Caco-2 (cell line): ENCODE measurements at regions of chr17 and their contacts with region 1.

Region 1: DNA sequence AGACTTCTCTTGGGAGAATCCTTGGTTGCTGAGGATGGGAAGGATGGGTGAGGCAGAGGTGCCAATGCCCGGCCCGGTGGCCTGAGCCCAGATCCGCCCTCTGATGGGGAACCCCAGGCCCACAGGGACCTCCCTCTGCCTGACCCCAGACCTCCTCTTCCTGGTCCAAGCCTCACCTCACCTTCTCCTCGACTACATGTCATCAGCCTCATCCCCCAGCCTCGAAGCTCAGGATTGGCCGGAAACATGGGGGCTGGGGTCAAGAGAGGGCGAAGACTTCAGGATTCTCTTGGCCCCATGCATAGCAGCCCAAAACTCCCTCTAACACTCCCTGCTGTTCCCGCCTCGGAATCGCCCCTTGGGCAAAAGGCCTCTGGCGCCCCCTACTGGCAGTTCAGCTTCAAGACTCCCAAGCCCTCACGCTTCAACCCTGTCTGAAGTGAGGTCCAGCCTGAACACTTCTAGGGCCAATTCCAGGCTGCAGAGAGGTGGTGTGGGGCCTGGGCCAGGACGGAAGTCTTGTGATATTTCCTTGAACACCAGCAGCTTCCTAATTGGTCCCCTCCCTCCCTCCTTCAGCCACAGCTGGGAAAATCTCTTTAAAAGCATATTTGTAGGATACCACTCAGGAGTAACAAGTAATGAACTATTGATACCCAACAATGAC is 47.2 kb downstream of the ARHGAP27 start:
- DNase-seq: peak; percentile 87 to 94
- H3K4me3 ChIP-seq: no peak overlapping the region
- H3K4me3 Mint-ChIP-seq: no peak overlapping the region
- H3K27ac Mint-ChIP-seq: peak overlapping the region; percentile 6
- H3K4me1 ChIP-seq: peaks cover 8% of the 10 kb centered on the region; the same call in 1 of the 2 replicates
- H3K4me1 Mint-ChIP-seq: peaks cover 28% of the 10 kb centered on the region
- H3K27me3 ChIP-seq: no peaks in the 10 kb centered on the region
- H3K27me3 Mint-ChIP-seq: peaks cover 3% of the 10 kb centered on the region
- CTCF ChIP-seq: peak; percentile 97 to 98

Region 2: GRCh38 chr17:45235416-45236281 is 149.8 kb before region 1 on chr17:
- CTCF ChIA-PET with region 1: no interaction called
- POLR2A ChIA-PET with region 1: no interaction called
- intact Hi-C with region 1: loop called (anchors 2 kb)
- DNase-seq: peak; percentile 72 to 77
- H3K4me3 ChIP-seq: no peak overlapping the region
- H3K4me3 Mint-ChIP-seq: no peak overlapping the region
- H3K27ac Mint-ChIP-seq: no peak overlapping the region
- H3K4me1 ChIP-seq: peaks cover 6% of the 10 kb centered on the region; the same call in 1 of the 2 replicates
- H3K4me1 Mint-ChIP-seq: no peaks in the 10 kb centered on the region
- H3K27me3 ChIP-seq: no peaks in the 10 kb centered on the region
- H3K27me3 Mint-ChIP-seq: peaks cover 4% of the 10 kb centered on the region
- CTCF ChIP-seq: peak; percentile 82 to 86

Region 3: DNA sequence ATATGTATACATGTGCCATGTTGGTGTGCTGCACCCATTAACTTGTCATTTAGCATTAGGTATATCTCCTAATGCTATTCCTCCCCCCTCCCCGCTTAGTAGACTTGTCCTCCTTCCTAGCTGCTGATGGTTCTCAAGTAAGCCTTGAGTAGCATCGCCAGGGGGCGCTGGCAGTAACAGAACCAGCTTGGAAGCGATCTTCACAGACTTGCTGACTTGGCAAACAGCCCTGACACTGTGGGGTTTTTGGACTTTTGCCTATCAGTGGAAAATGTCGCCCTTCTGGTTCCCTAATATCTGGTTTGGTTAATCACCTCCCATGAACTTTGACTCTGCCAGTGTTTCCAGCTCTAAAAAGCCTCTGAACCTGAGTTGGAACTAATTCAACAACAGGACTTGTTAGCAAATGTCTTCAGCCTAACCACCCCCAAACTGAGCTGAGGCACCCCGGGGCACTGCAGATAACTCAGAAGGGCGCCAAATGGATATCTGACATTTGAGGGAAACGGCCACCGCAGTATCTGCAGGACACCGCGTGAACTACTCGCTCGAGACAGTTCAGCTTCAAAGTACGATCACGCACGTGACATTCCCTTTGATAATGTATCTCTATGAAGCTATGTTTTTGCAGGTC is 108.1 kb before region 1 on chr17:
- CTCF ChIA-PET with region 1: interaction called, 45 read pairs
- POLR2A ChIA-PET with region 1: interaction called, 5 read pairs
- intact Hi-C with region 1: loop called (anchors 1 kb)
- DNase-seq: peak; percentile 94 to 95
- H3K4me3 ChIP-seq: no peak overlapping the region
- H3K4me3 Mint-ChIP-seq: peak overlapping the region; percentile 41
- H3K27ac Mint-ChIP-seq: peak overlapping the region; percentile 61
- H3K4me1 ChIP-seq: peaks cover 11% of the 10 kb centered on the region
- H3K4me1 Mint-ChIP-seq: peaks cover 12% of the 10 kb centered on the region
- H3K27me3 ChIP-seq: no peaks in the 10 kb centered on the region
- H3K27me3 Mint-ChIP-seq: no peaks in the 10 kb centered on the region
- CTCF ChIP-seq: peak; percentile 88 to 96

Region 4: GRCh38 chr17:45305532-45306087 is 79.9 kb before region 1 on chr17:
- CTCF ChIA-PET with region 1: interaction called, 10 read pairs
- POLR2A ChIA-PET with region 1: no interaction called
- intact Hi-C with region 1: loop called (anchors 1 kb)
- DNase-seq: no peak
- H3K4me3 ChIP-seq: no peak overlapping the region
- H3K4me3 Mint-ChIP-seq: no peak overlapping the region
- H3K27ac Mint-ChIP-seq: no peak overlapping the region
- H3K4me1 ChIP-seq: peaks cover 9% of the 10 kb centered on the region
- H3K4me1 Mint-ChIP-seq: no peaks in the 10 kb centered on the region
- H3K27me3 ChIP-seq: no peaks in the 10 kb centered on the region
- H3K27me3 Mint-ChIP-seq: no peaks in the 10 kb centered on the region
- CTCF ChIP-seq: no peak